Posterior vena cava (tissue), 2 donors: ENCODE measurements at regions of chr16 and their contacts with region 1.

Region 1: DNA sequence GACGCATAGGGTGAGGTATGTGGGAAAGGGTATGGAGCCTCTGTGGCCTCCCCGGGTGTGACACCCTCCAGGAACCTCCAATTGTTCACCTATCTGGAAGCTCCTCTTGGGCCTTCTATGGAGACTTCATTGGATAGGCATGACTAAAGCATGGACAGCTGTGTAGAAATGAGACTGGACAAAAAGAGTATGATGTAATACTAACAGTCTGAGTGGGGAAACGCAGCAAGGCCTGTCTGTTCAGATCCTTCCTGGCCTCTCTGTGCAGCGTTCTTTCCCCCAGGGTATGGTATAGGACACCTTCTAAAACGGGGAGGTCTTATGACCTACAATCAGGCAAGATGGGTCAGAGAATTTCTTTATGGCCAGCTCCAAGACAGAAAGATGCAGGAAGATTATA is 30.7 kb upstream of the CCNF start:
- DNase-seq: no peak

Region 2: GRCh38 chr16:3123986-3124886 is 725.7 kb after region 1 on chr16:
- intact Hi-C with region 1: loop called in 1 of 2 experiments (anchors 5 kb)
- DNase-seq: peak; percentile 99